ENCODE measurements at regions of chr1 and their contacts with region 1.

Region 1: DNA sequence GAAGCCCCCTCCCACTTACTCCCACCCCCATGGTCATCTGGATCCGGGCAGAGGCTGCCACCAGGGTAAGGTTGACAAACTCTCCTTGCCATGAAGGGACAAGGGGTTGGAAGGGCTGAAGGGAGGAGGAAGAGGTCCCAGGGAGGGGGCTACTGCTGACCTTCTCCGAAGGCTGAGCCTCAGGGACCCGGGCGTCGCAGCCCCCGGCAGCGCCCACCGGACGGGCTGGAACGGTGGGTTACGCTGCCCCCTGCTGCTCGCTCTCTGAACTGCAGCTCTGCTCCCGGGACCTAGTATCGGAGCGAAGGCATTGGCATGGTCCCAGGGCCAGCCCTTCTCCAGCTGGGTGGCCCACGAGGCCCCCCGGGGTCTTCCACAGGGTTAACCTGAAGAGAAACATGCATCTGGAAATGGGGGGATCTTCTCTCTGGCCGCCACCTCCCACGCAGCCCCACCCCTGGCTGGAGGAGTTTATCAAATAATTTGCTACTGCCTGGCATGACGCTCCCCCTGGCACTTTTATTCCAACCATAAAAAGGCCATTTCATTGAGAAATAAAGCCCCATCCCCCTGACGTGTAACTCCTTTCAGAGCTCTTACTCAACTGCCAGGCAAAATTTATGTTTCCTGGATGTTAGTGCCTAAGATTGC is 70.4 kb upstream of the TARDBP start:
- DNase-seq: peak; percentile 76
- ATAC-seq: peak; percentile 53
- H3K4me3 Mint-ChIP-seq: no peak overlapping the region
- H3K27ac Mint-ChIP-seq: no peak overlapping the region
- H3K4me1 Mint-ChIP-seq: peaks cover 37% of the 10 kb centered on the region
- H3K27me3 Mint-ChIP-seq: peaks cover 50% of the 10 kb centered on the region
- CTCF ChIP-seq: peak; percentile 99

Region 2: DNA sequence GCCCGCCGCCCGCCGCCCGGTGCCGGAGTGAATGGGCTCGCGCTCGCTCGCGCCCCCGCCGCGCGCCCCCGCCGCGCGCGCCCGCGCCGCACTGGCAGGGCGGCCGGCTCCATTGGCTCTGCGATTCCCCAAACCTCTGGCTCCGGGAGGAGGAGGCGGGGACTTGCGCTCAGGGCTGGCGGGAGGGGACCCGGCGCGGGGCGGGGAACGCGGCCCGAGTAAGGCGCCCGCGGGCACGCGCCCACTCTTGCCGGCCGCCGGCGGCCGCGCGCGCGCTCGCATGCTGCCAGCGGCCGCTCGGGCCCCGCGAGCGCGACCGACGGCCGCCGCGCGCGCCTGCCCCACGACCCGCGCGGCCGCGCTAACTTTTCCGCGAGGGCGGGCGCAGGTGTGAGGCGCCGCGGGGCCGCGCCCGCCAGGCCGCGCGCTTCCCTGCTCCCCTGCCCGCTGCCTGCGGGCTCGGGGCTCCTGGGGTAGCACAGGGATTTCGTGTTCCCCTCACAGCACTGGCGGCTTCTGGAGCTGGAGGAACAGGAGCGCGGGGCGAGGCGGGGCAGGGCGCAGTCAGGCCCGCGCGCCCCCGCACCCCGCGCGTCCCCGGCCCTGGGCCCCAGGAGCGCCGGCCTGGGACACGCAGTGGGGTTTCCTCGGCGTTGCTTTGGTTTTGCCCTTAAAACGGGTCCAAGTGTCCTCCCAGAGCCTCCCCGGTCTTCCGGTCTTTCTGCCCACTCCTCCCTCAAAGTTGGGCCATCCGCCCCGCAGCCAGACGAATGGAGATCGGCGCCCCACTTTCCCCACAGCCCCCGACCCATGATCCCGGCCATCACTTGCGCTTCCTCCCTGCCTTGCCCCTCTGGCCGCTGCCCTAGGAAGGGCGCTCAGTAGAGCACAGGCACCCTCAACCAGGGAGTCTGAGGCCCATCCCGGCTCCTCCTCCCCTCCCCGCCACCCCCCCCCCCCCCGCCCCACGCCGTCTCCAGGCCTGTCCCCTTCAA is 247.1 kb before region 1 on chr1:
- CTCF ChIA-PET with region 1: interaction called, 5 read pairs
- POLR2A ChIA-PET with region 1: no interaction called
- intact Hi-C with region 1: loop called (anchors 10 kb)
- DNase-seq: peak; percentile 77
- ATAC-seq: peak; percentile 57
- H3K4me3 Mint-ChIP-seq: peak overlapping the region; percentile 63
- H3K27ac Mint-ChIP-seq: no peak overlapping the region
- H3K4me1 Mint-ChIP-seq: peaks cover 40% of the 10 kb centered on the region
- H3K27me3 Mint-ChIP-seq: peaks cover 4% of the 10 kb centered on the region
- CTCF ChIP-seq: no peak

Region 3: GRCh38 chr1:10962483-10962882 is 20.5 kb after region 1 on chr1:
- CTCF ChIA-PET with region 1: interaction called, 10 read pairs
- POLR2A ChIA-PET with region 1: interaction called, 3 read pairs
- intact Hi-C with region 1: no loop called
- DNase-seq: no peak
- ATAC-seq: no peak
- H3K4me3 Mint-ChIP-seq: no peak overlapping the region
- H3K27ac Mint-ChIP-seq: no peak overlapping the region
- H3K4me1 Mint-ChIP-seq: peaks cover 18% of the 10 kb centered on the region
- H3K27me3 Mint-ChIP-seq: peaks cover 16% of the 10 kb centered on the region
- CTCF ChIP-seq: no peak